Dorsolateral prefrontal cortex (tissue), 120 donors: ENCODE measurements at regions of chr17 and their contacts with region 1.

Region 1: GRCh38 chr17:64420143-64420971 is 28.6 kb upstream of the MILR1 start:
- DNase-seq: no peak
- H3K4me3 ChIP-seq: no peak overlapping the region
- H3K27ac ChIP-seq: no peak overlapping the region
- H3K27me3 ChIP-seq: no peaks in the 10 kb centered on the region
- CTCF ChIP-seq: peak; percentile 62 to 93 (median 81)

Region 2: DNA sequence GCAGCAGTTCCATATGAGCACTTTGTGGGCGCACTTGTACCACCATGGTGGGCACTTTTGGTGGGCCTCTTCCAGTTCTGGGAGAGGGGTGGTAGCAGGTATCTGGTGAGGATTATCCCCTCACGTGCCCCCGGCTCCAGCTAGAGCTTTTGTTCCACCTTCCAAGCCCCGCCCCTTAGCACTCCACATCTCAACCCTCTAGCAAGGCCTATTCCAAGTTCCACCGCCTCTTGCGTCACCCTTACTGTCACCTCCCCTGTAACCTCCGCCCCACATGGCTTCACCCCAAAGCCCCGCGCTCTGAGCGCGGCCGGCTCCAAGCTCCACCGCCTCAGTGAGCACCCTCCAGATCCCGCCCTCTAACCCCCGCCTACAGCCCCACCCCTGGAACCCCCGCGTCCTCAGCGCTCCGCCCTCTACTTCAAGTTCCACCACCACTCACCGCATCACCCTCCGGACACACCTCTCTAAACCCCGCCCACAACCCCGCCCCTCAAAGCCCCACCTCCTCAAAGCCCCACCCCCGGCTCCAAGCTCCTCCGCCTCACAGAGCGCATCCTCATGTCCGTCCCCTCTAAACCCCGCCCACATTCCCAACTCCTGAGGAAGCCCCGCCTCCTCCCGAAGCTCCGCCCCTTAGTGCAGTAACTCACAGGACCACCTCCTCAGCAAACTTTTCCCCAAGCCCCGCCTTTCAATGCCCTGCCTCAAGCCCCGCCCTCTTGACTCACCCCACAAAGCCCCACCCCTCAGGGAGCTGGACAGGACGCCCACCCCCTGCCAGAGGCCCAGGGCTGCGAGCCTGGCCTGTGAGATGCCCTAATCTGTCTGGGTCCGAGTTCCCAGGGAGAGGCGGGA is 458.8 kb before region 1 on chr17:
- intact Hi-C with region 1: no loop called
- DNase-seq: no peak
- H3K4me3 ChIP-seq: peak overlapping the region in 1 of 59 donors; percentile 10
- H3K27ac ChIP-seq: no peak overlapping the region
- H3K27me3 ChIP-seq: peaks cover 0 to 9% (median 0%) of the 10 kb centered on the region in 45 donors
- CTCF ChIP-seq: no peak

Region 3: GRCh38 chr17:64306850-64307463 is 113.4 kb before region 1 on chr17:
- intact Hi-C with region 1: loop called in 1 of 2 experiments (anchors 5 kb)
- DNase-seq: peak in 8 of 10 donors; percentile 37 to 65 (median 59)
- H3K4me3 ChIP-seq: no peak overlapping the region
- H3K27ac ChIP-seq: no peak overlapping the region
- H3K27me3 ChIP-seq: peaks cover 0 to 2% (median 0%) of the 10 kb centered on the region in 45 donors
- CTCF ChIP-seq: peak; percentile 73 to 98 (median 85)

Region 4: GRCh38 chr17:64320613-64321553 is 99.5 kb before region 1 on chr17:
- intact Hi-C with region 1: loop called (anchors 2 to 5 kb)
- DNase-seq: peak in 8 of 10 donors; percentile 24 to 71 (median 59)
- H3K4me3 ChIP-seq: peak overlapping the region in 29 of 59 donors; percentile 4 to 53 (median 29)
- H3K27ac ChIP-seq: no peak overlapping the region
- H3K27me3 ChIP-seq: no peaks in the 10 kb centered on the region
- CTCF ChIP-seq: peak; percentile 58 to 92 (median 80)

Region 5: DNA sequence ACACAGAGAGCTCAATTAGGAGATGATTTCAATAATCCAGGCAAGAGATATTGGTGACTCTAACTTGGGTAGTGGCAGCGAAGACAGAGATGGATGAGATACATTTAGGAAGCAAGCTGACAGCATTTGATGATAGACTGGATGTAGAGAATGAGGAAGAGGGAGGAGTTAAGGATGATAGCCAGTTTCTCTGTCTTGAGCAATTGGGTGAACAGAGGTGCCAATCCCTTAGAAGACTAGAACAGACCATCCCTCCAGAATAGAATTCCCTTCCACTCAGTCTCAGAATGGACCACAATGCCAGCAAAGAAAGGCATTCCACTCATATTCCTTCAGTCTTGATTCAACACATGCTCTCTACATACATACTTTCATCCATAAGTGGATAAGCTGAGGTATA is 59.3 kb after region 1 on chr17:
- intact Hi-C with region 1: loop called in 1 of 2 experiments (anchors 10 kb)
- DNase-seq: no peak
- H3K4me3 ChIP-seq: no peak overlapping the region
- H3K27ac ChIP-seq: no peak overlapping the region
- H3K27me3 ChIP-seq: no peaks in the 10 kb centered on the region
- CTCF ChIP-seq: no peak

Region 6: GRCh38 chr17:64648234-64648633 is 227.9 kb after region 1 on chr17:
- intact Hi-C with region 1: loop called in 1 of 2 experiments (anchors 5 kb)
- DNase-seq: no peak
- H3K4me3 ChIP-seq: no peak overlapping the region
- H3K27ac ChIP-seq: no peak overlapping the region
- H3K27me3 ChIP-seq: no peaks in the 10 kb centered on the region
- CTCF ChIP-seq: no peak